ENCODE measurements at regions of chr10 and their contacts with region 1.

Region 1: DNA sequence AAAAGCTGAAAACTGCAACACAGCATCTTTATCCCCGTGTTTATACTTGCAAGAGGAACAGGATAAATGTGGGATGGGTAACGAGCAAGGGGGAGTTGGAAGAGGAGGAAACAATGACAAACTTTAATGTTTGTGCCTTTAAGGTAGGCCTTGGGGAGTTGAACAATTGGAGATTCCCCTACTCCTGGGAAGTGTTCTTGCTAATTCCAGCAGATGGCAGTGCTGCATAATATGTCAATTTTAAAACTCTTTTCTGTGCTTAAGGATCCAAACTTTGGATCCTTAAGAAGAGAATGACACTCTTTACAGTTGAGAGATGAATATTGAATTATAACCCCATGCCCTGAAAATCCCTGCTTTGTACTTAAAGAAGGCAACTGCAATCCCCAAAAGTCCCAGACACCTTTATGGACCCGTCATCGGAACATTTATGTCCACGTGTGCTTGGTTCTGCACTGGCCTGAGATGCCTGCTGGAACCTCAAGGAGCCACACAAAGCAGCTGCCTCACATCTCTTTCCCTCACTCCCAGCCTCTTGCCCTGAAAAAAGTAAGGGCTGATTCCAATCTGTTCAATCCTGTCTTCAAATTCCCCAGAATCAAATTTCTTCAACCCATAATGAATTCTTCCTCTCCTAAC is 12.0 kb downstream of the IFIT5 start:
- DNase-seq: peak in 2 of 7 donors; percentile 18 to 42
- H3K4me3 ChIP-seq: no peak overlapping the region
- H3K27ac ChIP-seq: no peak overlapping the region
- H3K4me1 ChIP-seq: peaks cover 0 to 5% of the 10 kb centered on the region in 2 donors
- H3K27me3 ChIP-seq: no peaks in the 10 kb centered on the region
- CTCF ChIP-seq: peak; percentile 66 to 90 (median 86)
- POLR2A ChIP-seq: no peak

Region 2: GRCh38 chr10:89563861-89564478 is 137.6 kb after region 1 on chr10:
- intact Hi-C with region 1: loop called (anchors 5 kb)
- DNase-seq: no peak
- H3K4me3 ChIP-seq: no peak overlapping the region
- H3K27ac ChIP-seq: no peak overlapping the region
- H3K4me1 ChIP-seq: peaks cover 0 to 12% of the 10 kb centered on the region in 2 donors
- H3K27me3 ChIP-seq: no peaks in the 10 kb centered on the region
- CTCF ChIP-seq: peak; percentile 68 to 86 (median 77)
- POLR2A ChIP-seq: no peak